Endothelial cell of umbilical vein (primary cell): ENCODE measurements at regions of chr14 and their contacts with region 1.

Region 1: GRCh38 chr14:23269193-23269592 is 16.7 kb downstream of the HOMEZ start:
- DNase-seq: no peak
- H3K4me3 ChIP-seq: no peak overlapping the region
- H3K27ac ChIP-seq: no peak overlapping the region
- H3K4me1 ChIP-seq: no peaks in the 10 kb centered on the region
- H3K27me3 ChIP-seq: peaks cover 2 to 7% of the 10 kb centered on the region in 2 experiments
- CTCF ChIP-seq: no peak
- POLR2A ChIP-seq: no peak

Region 2: GRCh38 chr14:23294734-23295561 is 25.8 kb after region 1 on chr14:
- CTCF ChIA-PET with region 1: interaction called, 17 read pairs
- POLR2A ChIA-PET with region 1: no interaction called
- dilution Hi-C with region 1: no loop called
- intact Hi-C with region 1: loop called (anchors 1 kb)
- DNase-seq: peak; percentile 55
- H3K4me3 ChIP-seq: no peak overlapping the region
- H3K27ac ChIP-seq: no peak overlapping the region
- H3K4me1 ChIP-seq: peaks cover under 1% of the 10 kb centered on the region
- H3K27me3 ChIP-seq: peaks cover 6% of the 10 kb centered on the region in 2 experiments
- CTCF ChIP-seq: peak; percentile 85 to 87
- POLR2A ChIP-seq: no peak

Region 3: DNA sequence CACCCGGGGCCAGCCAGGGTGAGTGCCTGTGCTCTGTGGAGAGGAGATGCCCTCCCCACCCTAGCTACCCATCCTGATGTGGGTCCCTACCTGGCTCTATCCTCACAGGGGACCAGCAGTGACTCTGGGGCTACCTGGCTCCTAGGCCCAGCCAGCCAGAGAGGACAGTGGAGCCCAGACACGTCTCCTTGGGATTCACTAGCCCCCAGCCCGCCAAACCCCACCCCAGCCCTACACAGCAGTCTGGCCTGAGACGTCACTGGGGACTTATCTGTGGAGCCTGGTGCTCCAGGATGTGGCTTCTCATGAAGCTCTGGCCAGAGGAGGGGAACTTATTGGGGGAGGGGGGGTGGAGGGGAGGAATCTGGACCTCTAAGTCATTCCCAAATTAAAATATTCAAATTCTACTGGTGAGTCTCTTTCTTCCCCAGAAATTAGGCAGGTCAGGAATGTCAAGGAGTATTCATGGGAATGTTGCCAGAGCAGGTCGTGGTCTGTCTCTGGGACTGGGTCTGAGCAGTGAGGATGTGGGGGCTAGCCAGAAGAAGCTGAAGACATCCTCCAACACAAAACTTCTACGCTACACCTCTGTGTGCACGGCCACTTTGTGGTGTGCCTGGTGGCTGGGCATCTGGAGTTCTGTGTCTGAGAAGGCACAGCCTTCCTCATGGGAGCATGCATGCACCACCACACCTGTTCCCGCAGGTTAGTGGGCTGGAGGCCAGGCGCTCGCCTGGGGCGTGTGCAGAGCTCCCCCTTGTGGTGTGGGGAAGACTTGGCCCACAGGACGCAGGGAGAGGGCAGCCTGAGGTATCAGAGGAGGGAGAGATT is 110.4 kb after region 1 on chr14:
- CTCF ChIA-PET with region 1: interaction called, 55 read pairs
- POLR2A ChIA-PET with region 1: no interaction called
- dilution Hi-C with region 1: no loop called
- intact Hi-C with region 1: loop called (anchors 1 kb)
- DNase-seq: peak; percentile 34
- H3K4me3 ChIP-seq: no peak overlapping the region
- H3K27ac ChIP-seq: no peak overlapping the region
- H3K4me1 ChIP-seq: no peaks in the 10 kb centered on the region
- H3K27me3 ChIP-seq: no peaks in the 10 kb centered on the region
- CTCF ChIP-seq: peak; percentile 80 to 92
- POLR2A ChIP-seq: no peak